Dorsolateral prefrontal cortex (tissue), 120 donors: ENCODE measurements at regions of chr11 and their contacts with region 1.

Region 1: DNA sequence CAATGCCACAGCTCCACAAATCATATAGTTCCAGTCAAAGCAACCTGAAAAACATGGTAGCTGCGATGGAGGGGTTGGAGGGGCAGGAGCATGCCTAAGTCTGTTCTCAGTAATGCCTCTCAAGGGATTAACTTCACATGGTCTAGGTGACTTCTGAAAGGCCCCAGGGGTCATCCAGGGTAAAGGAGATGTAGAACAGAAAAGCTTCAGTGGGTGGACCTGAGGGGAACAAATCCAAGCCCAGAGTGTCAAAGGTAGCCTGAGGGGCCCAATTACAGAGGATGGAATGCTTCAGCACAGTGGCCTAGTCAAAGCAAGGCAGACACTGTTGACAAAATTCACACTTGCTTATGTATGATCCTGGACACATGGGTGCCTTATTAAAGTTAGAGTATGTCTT is 23.3 kb downstream of the OR4D9 start:
- DNase-seq: no peak
- H3K4me3 ChIP-seq: no peak overlapping the region
- H3K27ac ChIP-seq: no peak overlapping the region
- H3K27me3 ChIP-seq: no peaks in the 10 kb centered on the region
- CTCF ChIP-seq: no peak

Region 2: DNA sequence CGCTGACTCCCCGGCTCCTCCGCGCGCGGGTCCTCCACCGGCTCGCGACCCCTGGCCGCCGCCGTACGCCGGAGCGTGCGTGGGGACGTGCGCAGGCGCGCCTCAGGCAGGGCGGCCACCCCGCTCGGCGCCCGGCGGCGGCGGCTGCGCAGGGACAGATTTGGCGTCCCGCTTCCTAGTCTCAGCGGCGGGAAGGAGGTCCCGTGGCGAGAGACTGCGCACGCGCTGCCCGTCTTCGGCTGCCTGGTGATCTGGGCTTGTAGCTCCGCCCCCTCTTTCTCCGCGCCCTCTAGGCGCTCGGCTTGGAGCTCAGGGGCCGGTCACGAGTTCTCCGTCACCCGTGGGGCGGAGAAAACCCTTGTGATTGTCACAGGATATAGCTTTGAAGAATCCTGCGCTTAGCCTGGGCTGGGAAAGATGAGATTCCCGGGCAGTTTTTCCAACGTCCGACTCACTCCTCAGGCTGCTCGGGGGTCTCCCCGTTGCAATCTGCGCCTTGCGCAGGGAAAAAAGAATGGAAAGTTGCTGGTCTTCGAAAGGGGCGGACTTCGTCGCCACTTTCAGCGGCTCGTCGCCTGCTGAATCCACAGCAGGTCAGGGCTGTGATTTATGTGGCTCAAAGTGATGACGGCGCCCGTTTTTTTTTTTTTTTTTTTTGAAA is 134.4 kb after region 1 on chr11 and contains the start of gene PATL1:
- intact Hi-C with region 1: loop called in 1 of 2 experiments (anchors 5 kb)
- DNase-seq: peak; percentile 98 to 99 (median 98)
- H3K4me3 ChIP-seq: peak within 1 kb of the TSS; percentile 62 to 97 (median 87)
- H3K27ac ChIP-seq: peak within 1 kb of the TSS; percentile 91 to 100 (median 99)
- H3K27me3 ChIP-seq: no peaks in the 10 kb centered on the region
- CTCF ChIP-seq: peak in 23 of 56 donors; percentile 3 to 52 (median 29)
- total RNA-seq, gene PATL1: 14.6 to 38.0 (median 20.9) TPM

Region 3: GRCh38 chr11:59753650-59754493 is 219.2 kb after region 1 on chr11:
- intact Hi-C with region 1: no loop called
- DNase-seq: peak; percentile 74 to 92 (median 86)
- H3K4me3 ChIP-seq: peak overlapping the region; percentile 65 to 98 (median 86)
- H3K27ac ChIP-seq: peak overlapping the region in 54 of 59 donors; percentile 19 to 96 (median 90)
- H3K27me3 ChIP-seq: no peaks in the 10 kb centered on the region
- CTCF ChIP-seq: peak; percentile 87 to 98 (median 95)